HEK293 (cell line): ENCODE measurements at regions of chr1 and their contacts with region 1.

Region 1: GRCh38 chr1:31815752-31816500 is at the start of gene SPOCD1:
- H3K4me3 ChIP-seq: no peak within 1 kb of the TSS
- H3K27ac ChIP-seq: no peak within 1 kb of the TSS
- H3K4me1 ChIP-seq: no peaks in the 10 kb centered on the region
- CTCF ChIP-seq: peak; percentile 58

Region 2: DNA sequence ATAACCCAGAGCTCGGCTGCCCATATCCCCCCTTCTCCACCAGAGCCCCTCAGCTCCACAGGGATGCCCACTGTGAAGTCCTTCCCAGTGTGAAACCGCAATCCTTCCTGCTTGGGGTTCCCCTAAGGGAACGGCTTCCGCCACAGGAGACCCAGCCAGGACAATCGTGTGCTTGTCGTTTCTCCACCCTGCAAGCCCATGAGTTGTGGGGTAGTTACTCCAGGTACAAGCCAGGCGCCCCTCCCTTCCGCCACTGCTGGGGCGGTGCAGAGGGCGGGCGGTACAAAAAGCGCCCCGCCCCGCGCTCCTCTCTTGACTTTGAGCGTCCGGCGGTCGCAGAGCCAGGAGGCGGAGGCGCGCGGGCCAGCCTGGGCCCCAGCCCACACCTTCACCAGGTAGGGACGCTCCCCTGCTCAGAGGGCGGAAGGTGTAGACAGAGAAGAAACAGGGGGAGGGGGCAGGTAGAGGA is 239.7 kb before region 1 on chr1 and contains the start of gene TINAGL1:
- CTCF ChIA-PET with region 1: no interaction called
- POLR2A ChIA-PET with region 1: no interaction called
- H3K4me3 ChIP-seq: no peak within 1 kb of the TSS
- H3K27ac ChIP-seq: no peak within 1 kb of the TSS
- H3K4me1 ChIP-seq: no peaks in the 10 kb centered on the region
- CTCF ChIP-seq: no peak

Region 3: DNA sequence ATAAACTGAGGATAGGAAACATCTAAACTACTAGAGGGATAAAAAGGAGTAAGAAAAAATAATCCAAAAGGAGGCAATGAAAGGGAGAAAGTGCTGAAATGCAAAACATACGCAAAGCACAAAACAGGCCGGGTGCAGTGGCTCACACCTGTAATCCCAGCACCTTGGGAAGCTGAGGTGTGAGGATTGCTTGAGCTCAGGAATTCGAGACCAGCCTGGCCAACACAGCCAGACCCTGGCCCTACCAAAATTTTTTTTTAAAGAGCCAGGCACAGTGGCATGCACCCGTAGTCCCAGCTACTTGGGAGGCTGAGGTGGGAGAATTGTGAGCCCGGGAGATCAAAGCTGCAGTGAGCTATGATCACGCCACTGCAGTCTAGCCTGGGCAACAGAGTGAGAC is 10.6 kb before region 1 on chr1:
- CTCF ChIA-PET with region 1: interaction called, 16 read pairs
- POLR2A ChIA-PET with region 1: no interaction called
- H3K4me3 ChIP-seq: no peak overlapping the region
- H3K27ac ChIP-seq: no peak overlapping the region
- H3K4me1 ChIP-seq: no peaks in the 10 kb centered on the region
- CTCF ChIP-seq: no peak

Region 4: DNA sequence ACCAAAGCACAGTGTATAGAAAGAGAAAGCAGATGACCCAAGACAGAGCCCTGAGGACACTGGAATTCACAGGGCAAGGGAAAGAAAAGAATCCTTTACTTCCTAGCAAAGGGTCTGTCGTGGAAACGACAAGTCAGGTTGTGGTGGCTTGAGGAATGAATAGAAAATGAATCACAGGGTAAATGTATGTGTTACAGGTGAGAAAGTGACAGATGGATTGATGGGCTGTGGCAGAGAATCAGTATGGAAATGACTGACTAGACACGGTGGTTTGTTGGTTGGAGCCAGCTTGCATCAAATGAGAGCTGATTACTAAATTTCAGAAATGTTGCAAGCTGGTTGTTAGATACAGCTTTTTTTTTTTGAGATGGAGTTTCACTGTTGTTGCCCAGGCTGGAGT is 75.4 kb after region 1 on chr1:
- CTCF ChIA-PET with region 1: no interaction called
- POLR2A ChIA-PET with region 1: no interaction called
- H3K4me3 ChIP-seq: no peak overlapping the region
- H3K27ac ChIP-seq: no peak overlapping the region
- H3K4me1 ChIP-seq: no peaks in the 10 kb centered on the region
- CTCF ChIP-seq: no peak